ENCODE measurements at regions of chr18 and their contacts with region 1.

Region 1: GRCh38 chr18:50928551-50928950 is 39.3 kb upstream of the ELAC1 start:
- DNase-seq: no peak
- ATAC-seq: no peak
- H3K4me3 ChIP-seq: no peak overlapping the region
- H3K4me3 Mint-ChIP-seq: no peak overlapping the region
- H3K27ac ChIP-seq: no peak overlapping the region
- H3K27ac Mint-ChIP-seq: no peak overlapping the region
- H3K4me1 ChIP-seq: no peaks in the 10 kb centered on the region
- H3K4me1 Mint-ChIP-seq: no peaks in the 10 kb centered on the region
- H3K27me3 ChIP-seq: no peaks in the 10 kb centered on the region
- H3K27me3 Mint-ChIP-seq: no peaks in the 10 kb centered on the region

Region 2: DNA sequence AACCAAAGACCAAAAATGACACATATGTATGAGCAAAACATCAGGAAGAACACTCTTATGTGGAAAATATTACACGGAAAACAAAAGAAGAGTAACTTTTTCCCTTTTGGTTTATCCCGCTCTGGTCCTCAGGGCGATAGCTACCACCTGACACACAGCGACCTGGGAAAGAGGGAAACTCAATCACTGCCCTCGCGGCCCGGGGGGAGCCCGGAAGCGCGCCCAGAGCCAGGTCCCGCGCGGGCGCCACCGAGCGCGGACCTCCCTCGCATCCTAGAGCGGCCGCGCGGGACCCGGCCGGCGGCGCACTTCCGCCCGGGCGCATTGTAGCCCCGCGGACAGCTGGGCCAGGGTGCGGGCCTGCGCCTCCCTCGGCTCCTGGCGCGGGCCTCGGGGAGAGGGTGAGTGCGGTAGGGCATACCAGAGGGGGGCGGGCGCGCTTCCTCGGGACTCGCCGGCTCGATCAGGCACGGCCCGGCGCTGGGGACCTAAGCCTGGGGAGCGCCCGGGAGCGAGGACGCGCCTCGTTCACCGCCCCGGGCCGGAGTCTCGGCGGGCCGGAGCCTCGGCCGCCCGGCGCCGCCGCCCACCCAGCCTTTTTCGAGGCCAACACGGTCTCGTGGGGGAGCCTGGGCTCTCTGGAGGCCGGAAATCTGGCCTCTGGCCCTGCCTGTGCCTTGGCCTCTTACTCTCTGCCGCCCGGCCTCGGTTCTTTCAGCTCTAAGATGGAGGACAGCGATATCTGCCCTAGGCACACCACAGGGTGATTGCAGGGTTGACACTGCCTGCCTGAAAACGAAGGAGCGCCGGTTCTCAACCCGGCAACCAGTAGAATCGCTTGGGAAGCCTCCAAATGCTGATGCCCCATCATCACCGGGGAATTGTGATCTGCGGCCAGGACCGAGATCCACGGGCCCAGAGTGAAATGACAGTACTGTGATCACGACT is 39.4 kb after region 1 on chr18 and contains the start of gene ELAC1:
- CTCF ChIA-PET with region 1: no interaction called
- POLR2A ChIA-PET with region 1: interaction called in 1 of 2 experiments, 14 read pairs
- DNase-seq: peak; percentile 41 to 79 (median 58)
- ATAC-seq: peak; percentile 88 to 94 (median 92)
- H3K4me3 ChIP-seq: peak within 1 kb of the TSS; percentile 79 to 92
- H3K4me3 Mint-ChIP-seq: peak within 1 kb of the TSS; percentile 73 to 95 (median 91)
- H3K27ac ChIP-seq: peak within 1 kb of the TSS; percentile 88
- H3K27ac Mint-ChIP-seq: peak within 1 kb of the TSS; percentile 79 to 92
- H3K4me1 ChIP-seq: peaks cover 9% of the 10 kb centered on the region in 2 experiments
- H3K4me1 Mint-ChIP-seq: peaks cover 25 to 26% (median 25%) of the 10 kb centered on the region in 3 donors
- H3K27me3 ChIP-seq: no peaks in the 10 kb centered on the region
- H3K27me3 Mint-ChIP-seq: no peaks in the 10 kb centered on the region
- total RNA-seq, gene ELAC1: 5.2 to 8.3 (median 7.5) TPM

Region 3: GRCh38 chr18:51070545-51070944 is 142.0 kb after region 1 on chr18:
- CTCF ChIA-PET with region 1: no interaction called
- POLR2A ChIA-PET with region 1: no interaction called
- DNase-seq: no peak
- ATAC-seq: no peak
- H3K4me3 ChIP-seq: no peak overlapping the region
- H3K4me3 Mint-ChIP-seq: no peak overlapping the region
- H3K27ac ChIP-seq: no peak overlapping the region
- H3K27ac Mint-ChIP-seq: no peak overlapping the region
- H3K4me1 ChIP-seq: peaks cover 4 to 7% of the 10 kb centered on the region in 2 experiments
- H3K4me1 Mint-ChIP-seq: peaks cover 48 to 50% (median 48%) of the 10 kb centered on the region in 3 donors
- H3K27me3 ChIP-seq: no peaks in the 10 kb centered on the region
- H3K27me3 Mint-ChIP-seq: no peaks in the 10 kb centered on the region